MCF 10A (cell line): ENCODE measurements at regions of chr9 and their contacts with region 1.

Region 1: GRCh38 chr9:98315551-98316060 is 60.2 kb upstream of the TBC1D2 start:
- DNase-seq: peak; percentile 84
- H3K4me3 Mint-ChIP-seq: no peak overlapping the region
- H3K27ac Mint-ChIP-seq: no peak overlapping the region
- H3K4me1 Mint-ChIP-seq: peaks cover 6% of the 10 kb centered on the region
- H3K27me3 Mint-ChIP-seq: no peaks in the 10 kb centered on the region
- CTCF ChIP-seq: peak; percentile 93

Region 2: GRCh38 chr9:98412101-98412842 is 96.7 kb after region 1 on chr9:
- CTCF ChIA-PET with region 1: no interaction called
- POLR2A ChIA-PET with region 1: no interaction called
- intact Hi-C with region 1: no loop called
- DNase-seq: no peak
- H3K4me3 Mint-ChIP-seq: no peak overlapping the region
- H3K27ac Mint-ChIP-seq: no peak overlapping the region
- H3K4me1 Mint-ChIP-seq: no peaks in the 10 kb centered on the region
- H3K27me3 Mint-ChIP-seq: peaks cover 19% of the 10 kb centered on the region
- CTCF ChIP-seq: no peak

Region 3: GRCh38 chr9:98523231-98523896 is 207.8 kb after region 1 on chr9:
- CTCF ChIA-PET with region 1: interaction called, 3 read pairs
- POLR2A ChIA-PET with region 1: no interaction called
- intact Hi-C with region 1: loop called (anchors 2 kb)
- DNase-seq: peak; percentile 21
- H3K4me3 Mint-ChIP-seq: no peak overlapping the region
- H3K27ac Mint-ChIP-seq: no peak overlapping the region
- H3K4me1 Mint-ChIP-seq: peaks cover 8% of the 10 kb centered on the region
- H3K27me3 Mint-ChIP-seq: peaks cover 41% of the 10 kb centered on the region
- CTCF ChIP-seq: peak; percentile 30

Region 4: GRCh38 chr9:98558575-98558974 is 243.0 kb after region 1 on chr9:
- CTCF ChIA-PET with region 1: no interaction called
- POLR2A ChIA-PET with region 1: no interaction called
- intact Hi-C with region 1: no loop called
- DNase-seq: no peak
- H3K4me3 Mint-ChIP-seq: no peak overlapping the region
- H3K27ac Mint-ChIP-seq: no peak overlapping the region
- H3K4me1 Mint-ChIP-seq: no peaks in the 10 kb centered on the region
- H3K27me3 Mint-ChIP-seq: peaks cover 7% of the 10 kb centered on the region
- CTCF ChIP-seq: no peak

Region 5: GRCh38 chr9:98775831-98776441 is 460.3 kb after region 1 on chr9:
- CTCF ChIA-PET with region 1: interaction called, 103 read pairs
- POLR2A ChIA-PET with region 1: no interaction called
- intact Hi-C with region 1: loop called (anchors 1 kb)
- DNase-seq: peak; percentile 70
- H3K4me3 Mint-ChIP-seq: no peak overlapping the region
- H3K27ac Mint-ChIP-seq: no peak overlapping the region
- H3K4me1 Mint-ChIP-seq: no peaks in the 10 kb centered on the region
- H3K27me3 Mint-ChIP-seq: no peaks in the 10 kb centered on the region
- CTCF ChIP-seq: peak; percentile 69

Region 6: DNA sequence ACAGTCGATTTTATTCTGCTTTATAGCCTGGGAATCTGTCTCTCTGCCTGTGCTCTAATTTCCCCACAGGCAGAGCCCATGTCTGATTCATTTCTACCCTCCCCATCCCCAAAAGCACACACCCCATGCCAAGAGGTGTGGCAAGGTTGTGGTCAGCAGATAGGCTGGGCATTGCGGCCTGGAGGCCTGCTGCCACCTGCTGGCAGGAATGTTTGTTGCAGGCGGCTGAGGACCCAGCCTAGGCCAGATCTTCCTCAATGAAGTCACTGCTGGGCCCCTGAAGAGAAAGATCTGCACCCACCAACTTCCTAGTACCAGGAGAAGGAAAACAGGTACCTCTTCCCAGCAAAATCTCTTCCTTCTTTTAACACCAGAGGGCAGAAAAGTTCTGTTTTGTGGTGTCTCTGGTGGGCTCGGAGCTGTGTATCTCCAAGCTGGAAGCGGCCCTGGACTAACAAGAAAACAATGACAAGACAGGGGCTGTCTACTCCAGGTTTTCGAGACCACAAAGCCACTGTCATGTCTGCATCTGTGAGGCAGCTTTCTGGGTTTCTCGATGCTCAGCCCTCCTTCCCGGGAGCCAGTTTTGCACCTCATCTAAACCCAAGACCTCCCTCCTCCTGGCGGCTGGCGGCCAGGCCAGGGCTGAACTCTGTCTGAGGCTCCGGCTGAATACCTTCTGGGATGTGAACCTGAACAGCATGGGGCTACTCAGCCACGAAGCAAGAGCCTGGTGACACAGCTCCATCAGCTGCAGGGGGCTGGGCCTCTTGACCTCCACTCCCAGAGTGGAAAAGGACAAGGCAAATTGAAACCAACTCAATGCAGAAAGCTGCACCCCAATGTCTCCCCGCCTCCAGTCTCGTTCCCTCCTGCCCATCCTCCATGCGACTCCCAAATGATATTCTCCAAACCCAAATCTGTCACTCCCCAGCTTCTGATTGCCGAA is 475.8 kb after region 1 on chr9:
- CTCF ChIA-PET with region 1: interaction called, 88 read pairs
- POLR2A ChIA-PET with region 1: no interaction called
- intact Hi-C with region 1: loop called (anchors 1 kb)
- DNase-seq: peak; percentile 98
- H3K4me3 Mint-ChIP-seq: peak overlapping the region; percentile 50
- H3K27ac Mint-ChIP-seq: no peak overlapping the region
- H3K4me1 Mint-ChIP-seq: peaks cover 35% of the 10 kb centered on the region
- H3K27me3 Mint-ChIP-seq: no peaks in the 10 kb centered on the region
- CTCF ChIP-seq: peak; percentile 97

Region 7: DNA sequence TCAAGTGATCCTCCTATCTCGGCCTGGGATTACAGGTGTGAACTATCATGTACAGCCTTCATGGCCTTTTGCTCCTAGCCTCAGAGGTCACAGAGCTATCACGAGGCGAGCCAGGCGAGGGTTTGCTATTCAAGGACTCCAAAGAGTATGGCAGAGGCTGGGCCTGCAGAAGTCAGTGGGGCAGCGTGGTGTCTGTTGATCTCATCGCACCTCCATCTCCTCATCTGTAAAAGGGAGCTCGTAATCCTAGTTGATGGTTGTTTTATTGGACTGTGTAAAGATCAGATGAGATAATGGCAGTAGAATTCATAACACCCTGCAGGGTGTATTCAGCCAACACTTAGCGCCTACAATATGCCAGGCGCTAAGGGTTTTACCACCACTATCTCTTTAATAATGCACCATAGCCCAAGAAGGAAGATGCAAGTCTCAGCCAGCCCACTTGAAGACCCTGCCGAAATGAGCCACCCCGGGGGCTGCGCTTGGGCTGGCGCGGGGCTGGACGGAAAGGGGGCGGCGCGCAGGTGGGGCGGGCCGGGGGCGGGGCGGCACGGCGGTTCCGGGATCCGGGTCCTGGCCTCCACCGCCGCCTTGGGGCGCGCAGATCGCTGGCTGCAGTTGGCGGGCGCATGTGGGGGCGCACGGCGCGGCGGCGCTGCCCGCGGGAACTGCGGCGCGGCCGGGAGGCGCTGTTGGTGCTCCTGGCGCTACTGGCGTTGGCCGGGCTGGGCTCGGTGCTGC is 491.6 kb after region 1 on chr9 and contains the start of gene GALNT12:
- CTCF ChIA-PET with region 1: interaction called, 16 read pairs
- POLR2A ChIA-PET with region 1: no interaction called
- intact Hi-C with region 1: no loop called
- DNase-seq: no peak
- H3K4me3 Mint-ChIP-seq: peak within 1 kb of the TSS; percentile 14
- H3K27ac Mint-ChIP-seq: no peak within 1 kb of the TSS
- H3K4me1 Mint-ChIP-seq: peaks cover 39% of the 10 kb centered on the region
- H3K27me3 Mint-ChIP-seq: peaks cover 39% of the 10 kb centered on the region
- CTCF ChIP-seq: no peak
- total RNA-seq, gene GALNT12: not detected in 2 replicates